Natural killer cell (primary cell): ENCODE measurements at regions of chr17 and their contacts with region 1.

Region 1: DNA sequence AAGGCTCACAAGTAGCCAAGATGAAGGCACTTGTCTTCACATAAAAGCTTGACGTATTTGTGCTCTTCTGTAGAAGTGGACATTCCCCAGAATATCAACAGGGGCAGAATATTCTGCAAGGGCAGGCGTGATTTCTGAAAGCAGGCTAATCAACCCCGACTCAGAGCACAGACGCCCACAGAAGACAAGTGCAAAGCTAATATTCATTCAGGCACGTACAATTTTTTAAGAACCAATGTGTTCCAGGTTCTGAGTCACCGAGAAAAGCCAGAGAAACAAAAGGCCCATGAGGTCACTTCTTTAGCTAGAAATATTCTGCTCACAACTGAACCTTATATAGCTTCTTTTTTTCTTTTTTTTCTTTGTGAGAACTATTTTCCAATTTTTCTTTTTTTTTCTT is 121.6 kb downstream of the DNAH9 start:
- DNase-seq: no peak
- ATAC-seq: no peak
- H3K4me3 ChIP-seq: no peak overlapping the region
- H3K4me3 Mint-ChIP-seq: no peak overlapping the region
- H3K27ac ChIP-seq: no peak overlapping the region
- H3K27ac Mint-ChIP-seq: no peak overlapping the region
- H3K4me1 ChIP-seq: no peaks in the 10 kb centered on the region
- H3K4me1 Mint-ChIP-seq: no peaks in the 10 kb centered on the region
- H3K27me3 ChIP-seq: no peaks in the 10 kb centered on the region
- H3K27me3 Mint-ChIP-seq: no peaks in the 10 kb centered on the region
- CTCF ChIP-seq: no peak

Region 2: DNA sequence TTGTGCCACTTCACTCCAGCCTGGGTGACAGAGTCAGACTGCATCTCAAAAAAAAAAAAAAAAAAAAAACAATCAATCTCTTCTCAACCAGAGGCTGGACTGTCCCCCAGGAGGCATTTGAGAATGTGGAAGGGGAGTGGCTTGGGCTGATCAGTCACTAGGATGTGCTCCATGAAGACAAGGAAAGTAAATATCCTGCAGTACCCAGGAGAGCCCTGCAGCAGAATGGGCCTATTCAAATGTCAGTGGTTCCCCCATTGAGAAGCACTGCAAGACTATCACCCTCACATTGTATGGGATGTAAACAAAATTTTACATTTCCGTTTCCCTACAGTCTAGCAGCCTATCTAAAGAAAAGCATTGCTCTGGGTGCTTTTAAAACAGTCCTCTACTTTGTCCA is 51.2 kb before region 1 on chr17:
- intact Hi-C with region 1: loop called (anchors 10 kb)
- DNase-seq: no peak
- ATAC-seq: no peak
- H3K4me3 ChIP-seq: no peak overlapping the region
- H3K4me3 Mint-ChIP-seq: no peak overlapping the region
- H3K27ac ChIP-seq: no peak overlapping the region
- H3K27ac Mint-ChIP-seq: no peak overlapping the region
- H3K4me1 ChIP-seq: no peaks in the 10 kb centered on the region
- H3K4me1 Mint-ChIP-seq: no peaks in the 10 kb centered on the region
- H3K27me3 ChIP-seq: no peaks in the 10 kb centered on the region
- H3K27me3 Mint-ChIP-seq: no peaks in the 10 kb centered on the region
- CTCF ChIP-seq: no peak

Region 3: DNA sequence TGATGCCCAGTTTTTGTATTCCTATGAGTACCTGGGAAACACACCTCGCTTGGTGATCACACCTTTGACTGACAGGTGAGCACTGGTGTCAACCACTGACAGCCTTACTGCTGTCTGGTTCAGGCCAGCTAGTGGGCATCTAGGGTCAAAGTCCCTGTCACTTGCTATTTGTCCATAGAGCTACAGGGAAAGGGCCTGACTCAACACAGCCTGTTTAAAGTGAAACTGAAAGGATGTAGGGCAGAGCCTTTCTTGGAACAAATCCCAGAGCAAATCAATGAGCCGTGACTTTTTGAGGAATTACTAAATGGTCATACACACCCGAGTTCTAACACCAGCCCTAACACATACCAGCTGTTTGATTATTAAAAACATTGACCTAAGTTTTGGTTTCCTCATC is 14.7 kb before region 1 on chr17:
- intact Hi-C with region 1: no loop called
- DNase-seq: no peak
- ATAC-seq: no peak
- H3K4me3 ChIP-seq: no peak overlapping the region
- H3K4me3 Mint-ChIP-seq: no peak overlapping the region
- H3K27ac ChIP-seq: no peak overlapping the region
- H3K27ac Mint-ChIP-seq: no peak overlapping the region
- H3K4me1 ChIP-seq: no peaks in the 10 kb centered on the region
- H3K4me1 Mint-ChIP-seq: no peaks in the 10 kb centered on the region
- H3K27me3 ChIP-seq: no peaks in the 10 kb centered on the region
- H3K27me3 Mint-ChIP-seq: no peaks in the 10 kb centered on the region
- CTCF ChIP-seq: no peak